MCF 10A (cell line): ENCODE measurements at regions of chr3 and their contacts with region 1.

Region 1: GRCh38 chr3:182668974-182669373 is 124.3 kb upstream of the ATP11B start:
- DNase-seq: no peak
- H3K4me3 Mint-ChIP-seq: no peak overlapping the region
- H3K27ac Mint-ChIP-seq: no peak overlapping the region
- H3K4me1 Mint-ChIP-seq: peaks cover 17% of the 10 kb centered on the region
- H3K27me3 Mint-ChIP-seq: no peaks in the 10 kb centered on the region
- CTCF ChIP-seq: no peak

Region 2: DNA sequence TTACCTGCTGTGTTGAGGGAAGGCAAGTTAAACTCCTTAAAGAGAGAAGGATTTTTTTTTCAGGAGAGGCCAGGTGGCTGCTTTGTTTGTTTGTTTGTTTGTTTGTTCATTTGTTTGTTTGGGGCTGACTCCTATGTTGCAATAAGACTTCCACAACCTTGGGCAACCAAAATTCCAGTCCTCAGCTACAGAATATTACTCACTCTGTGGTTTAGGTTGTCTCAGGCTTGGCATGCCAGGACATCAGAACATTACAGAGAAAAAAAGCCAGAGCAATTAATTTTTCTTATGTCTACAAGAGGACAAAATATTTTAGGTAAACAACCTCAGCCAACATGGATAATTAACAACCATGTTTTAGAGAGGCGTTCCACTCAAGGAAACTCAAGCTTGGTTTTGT is 32.3 kb before region 1 on chr3:
- CTCF ChIA-PET with region 1: no interaction called
- POLR2A ChIA-PET with region 1: interaction called, 10 read pairs
- intact Hi-C with region 1: no loop called
- DNase-seq: peak; percentile 69
- H3K4me3 Mint-ChIP-seq: no peak overlapping the region
- H3K27ac Mint-ChIP-seq: peak overlapping the region; percentile 3
- H3K4me1 Mint-ChIP-seq: peaks cover 30% of the 10 kb centered on the region
- H3K27me3 Mint-ChIP-seq: no peaks in the 10 kb centered on the region
- CTCF ChIP-seq: no peak

Region 3: DNA sequence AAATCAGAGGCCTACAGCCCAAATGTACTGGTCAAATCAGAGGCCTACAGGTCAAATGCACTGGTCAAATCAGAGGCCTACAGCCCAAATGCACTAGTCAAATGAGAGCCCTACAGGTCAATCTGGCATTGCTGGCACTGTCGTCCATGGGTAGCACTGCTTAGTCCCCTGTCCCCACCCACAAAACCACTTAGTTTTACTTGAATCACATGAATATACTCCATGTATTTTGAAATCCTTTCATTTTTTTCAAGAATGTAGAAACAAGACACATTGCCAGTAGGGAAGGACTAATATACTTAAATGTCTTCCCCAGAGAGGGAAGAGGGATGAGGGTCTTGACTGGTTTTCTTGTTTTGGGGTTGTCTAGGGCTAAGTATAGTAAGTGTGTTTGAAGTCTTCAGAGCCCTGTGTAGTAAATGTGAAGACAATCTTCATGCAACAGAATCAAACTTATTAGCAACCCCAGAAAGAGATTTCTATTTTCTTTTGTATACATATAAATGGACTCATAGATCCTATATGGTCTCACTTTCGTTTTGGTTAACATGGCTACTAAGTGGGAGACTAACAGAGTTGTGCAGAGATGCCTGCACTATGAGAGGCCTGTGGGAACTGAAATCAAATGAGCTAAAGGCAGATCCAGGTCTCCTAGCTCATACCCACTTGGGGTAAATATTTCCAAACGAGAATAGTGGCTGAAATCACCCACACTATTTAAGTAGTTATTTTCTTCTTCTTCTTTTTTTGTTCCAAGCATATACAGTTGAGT is 349.6 kb after region 1 on chr3:
- CTCF ChIA-PET with region 1: no interaction called
- POLR2A ChIA-PET with region 1: no interaction called
- intact Hi-C with region 1: no loop called
- DNase-seq: no peak
- H3K4me3 Mint-ChIP-seq: no peak overlapping the region
- H3K27ac Mint-ChIP-seq: no peak overlapping the region
- H3K4me1 Mint-ChIP-seq: no peaks in the 10 kb centered on the region
- H3K27me3 Mint-ChIP-seq: no peaks in the 10 kb centered on the region
- CTCF ChIP-seq: no peak